ENCODE measurements at regions of chr14 and their contacts with region 1.

Region 1: GRCh38 chr14:38197001-38197783 is 10.5 kb upstream of the SSTR1 start:
- DNase-seq: no peak
- ATAC-seq: no peak
- H3K4me3 ChIP-seq: no peak overlapping the region
- H3K27ac ChIP-seq: no peak overlapping the region
- H3K4me1 ChIP-seq: no peaks in the 10 kb centered on the region
- H3K27me3 ChIP-seq: no peaks in the 10 kb centered on the region
- CTCF ChIP-seq: peak in 2 of 3 experiments; percentile 3 to 26; a peak in 2 of 6 replicates
- EP300 ChIP-seq: no peak
- POLR2A ChIP-seq: no peak
- RAD21 ChIP-seq: no peak

Region 2: DNA sequence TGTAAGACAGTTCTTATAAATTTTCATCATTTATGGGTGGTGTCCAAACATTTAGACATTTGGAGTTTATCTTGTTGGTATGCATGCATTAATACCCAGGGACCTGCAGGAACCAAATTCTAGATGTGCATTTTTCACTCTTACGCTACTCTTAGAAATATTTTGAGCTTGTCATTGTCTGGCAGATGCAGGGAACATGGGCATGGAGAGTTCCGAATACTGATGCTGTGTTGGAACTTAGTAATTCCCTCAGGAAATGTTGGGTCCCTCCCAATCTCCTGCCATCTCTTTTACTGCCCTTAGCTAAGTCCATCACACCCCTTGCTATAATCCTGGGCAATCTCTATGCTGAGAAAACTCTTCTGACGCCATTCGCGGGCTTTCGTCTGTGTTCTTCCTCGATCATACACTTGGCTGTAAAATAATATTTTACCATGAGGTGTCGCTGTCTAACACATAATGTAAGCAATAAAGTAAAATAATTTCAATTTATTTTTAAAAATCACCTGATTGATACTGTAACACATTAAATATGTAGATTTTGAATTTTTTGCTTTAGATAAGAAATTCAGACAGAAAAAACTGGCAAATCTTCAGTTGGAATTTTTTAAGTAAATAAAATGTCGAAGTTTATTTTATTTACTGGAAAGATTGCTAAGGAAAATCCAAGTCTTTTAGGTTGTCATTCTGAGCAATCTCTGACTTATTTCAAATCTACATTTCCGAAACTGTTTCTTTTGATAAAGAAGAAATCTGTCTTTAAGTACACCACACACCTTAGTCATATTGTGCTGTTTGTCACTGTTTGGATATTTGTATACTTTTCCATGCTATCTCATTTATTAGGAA is 293.6 kb before region 1 on chr14:
- CTCF ChIA-PET with region 1: no interaction called
- POLR2A ChIA-PET with region 1: no interaction called
- RAD21 ChIA-PET with region 1: no interaction called
- SMC1A ChIA-PET with region 1: no interaction called
- in situ Hi-C with region 1: no loop called
- intact Hi-C with region 1: loop called (anchors 10 kb)
- DNase-seq: no peak
- ATAC-seq: peak; percentile 42; the same call in 1 of the 3 replicates
- H3K4me3 ChIP-seq: no peak overlapping the region
- H3K27ac ChIP-seq: no peak overlapping the region
- H3K4me1 ChIP-seq: no peaks in the 10 kb centered on the region
- H3K27me3 ChIP-seq: no peaks in the 10 kb centered on the region
- CTCF ChIP-seq: peak; percentile 30 to 50 (median 41); a peak in 5 of 6 replicates
- EP300 ChIP-seq: no peak
- POLR2A ChIP-seq: no peak
- RAD21 ChIP-seq: peak; percentile 50

Region 3: GRCh38 chr14:38000340-38000739 is 196.9 kb before region 1 on chr14:
- CTCF ChIA-PET with region 1: no interaction called
- POLR2A ChIA-PET with region 1: no interaction called
- RAD21 ChIA-PET with region 1: no interaction called
- SMC1A ChIA-PET with region 1: no interaction called
- in situ Hi-C with region 1: no loop called
- intact Hi-C with region 1: no loop called
- DNase-seq: no peak
- ATAC-seq: no peak
- H3K4me3 ChIP-seq: no peak overlapping the region
- H3K27ac ChIP-seq: no peak overlapping the region
- H3K4me1 ChIP-seq: no peaks in the 10 kb centered on the region
- H3K27me3 ChIP-seq: no peaks in the 10 kb centered on the region
- CTCF ChIP-seq: no peak
- EP300 ChIP-seq: no peak
- POLR2A ChIP-seq: no peak
- RAD21 ChIP-seq: no peak

Region 4: GRCh38 chr14:38186216-38186615 is 11.0 kb before region 1 on chr14:
- CTCF ChIA-PET with region 1: no interaction called
- POLR2A ChIA-PET with region 1: no interaction called
- RAD21 ChIA-PET with region 1: no interaction called
- SMC1A ChIA-PET with region 1: no interaction called
- in situ Hi-C with region 1: no loop called
- intact Hi-C with region 1: no loop called
- DNase-seq: no peak
- ATAC-seq: no peak
- H3K4me3 ChIP-seq: no peak overlapping the region
- H3K27ac ChIP-seq: no peak overlapping the region
- H3K4me1 ChIP-seq: no peaks in the 10 kb centered on the region
- H3K27me3 ChIP-seq: no peaks in the 10 kb centered on the region
- CTCF ChIP-seq: no peak
- EP300 ChIP-seq: no peak
- POLR2A ChIP-seq: no peak
- RAD21 ChIP-seq: no peak

Region 5: DNA sequence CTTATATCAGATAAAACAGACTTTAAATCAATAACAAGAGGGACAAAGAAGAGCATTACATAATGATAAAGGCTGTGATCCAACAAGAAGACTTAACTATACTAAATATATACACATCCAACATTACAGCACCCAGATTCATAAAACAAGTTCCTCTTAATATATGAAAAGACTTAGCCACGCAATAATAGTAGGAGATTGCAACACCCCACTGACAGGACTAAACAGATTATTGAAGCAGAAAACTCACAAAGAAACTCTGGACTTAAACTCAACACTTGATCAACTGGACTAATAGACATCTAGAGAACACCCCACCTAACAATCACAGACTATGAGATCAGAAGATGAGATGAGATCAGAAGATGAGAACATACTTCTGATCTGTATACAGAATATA is 64.4 kb after region 1 on chr14:
- CTCF ChIA-PET with region 1: no interaction called
- POLR2A ChIA-PET with region 1: no interaction called
- RAD21 ChIA-PET with region 1: no interaction called
- SMC1A ChIA-PET with region 1: no interaction called
- in situ Hi-C with region 1: no loop called
- intact Hi-C with region 1: no loop called
- DNase-seq: no peak
- ATAC-seq: no peak
- H3K4me3 ChIP-seq: no peak overlapping the region
- H3K27ac ChIP-seq: no peak overlapping the region
- H3K4me1 ChIP-seq: no peaks in the 10 kb centered on the region
- H3K27me3 ChIP-seq: no peaks in the 10 kb centered on the region
- CTCF ChIP-seq: no peak
- EP300 ChIP-seq: no peak
- POLR2A ChIP-seq: no peak
- RAD21 ChIP-seq: no peak

Measured in GM12878 (cell line).